ENCODE measurements at regions of chr3 and their contacts with region 1.

Region 1: GRCh38 chr3:50192689-50193141 is 1.3 kb downstream of the GNAT1 start:
- DNase-seq: peak in 9 of 10 donors; percentile 49 to 94 (median 83)

Region 2: GRCh38 chr3:50121416-50122032 is 71.2 kb before region 1 on chr3:
- intact Hi-C with region 1: loop called (anchors 1 kb)
- DNase-seq: peak; percentile 61 to 97 (median 82)

Region 3: DNA sequence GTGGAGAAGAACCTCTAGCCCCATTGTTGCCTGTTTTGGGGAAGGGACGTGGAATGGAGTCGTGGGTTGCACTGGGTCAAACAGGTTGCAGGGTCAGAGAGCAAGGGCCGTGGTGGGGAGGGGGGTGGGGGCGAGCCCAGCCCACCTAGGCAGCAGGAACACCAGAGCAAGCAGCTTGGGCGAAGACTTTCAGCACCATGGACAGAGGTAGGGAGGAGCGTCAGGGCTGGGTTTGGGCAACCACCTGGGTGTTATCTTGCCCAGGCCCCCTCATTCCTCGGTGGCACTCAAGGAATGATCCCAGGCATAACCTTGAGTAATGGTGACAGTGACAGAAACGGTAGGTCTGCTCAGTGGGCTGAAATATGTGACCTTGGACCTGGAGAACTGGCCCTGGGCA is 212.5 kb after region 1 on chr3:
- intact Hi-C with region 1: no loop called
- DNase-seq: no peak

Region 4: DNA sequence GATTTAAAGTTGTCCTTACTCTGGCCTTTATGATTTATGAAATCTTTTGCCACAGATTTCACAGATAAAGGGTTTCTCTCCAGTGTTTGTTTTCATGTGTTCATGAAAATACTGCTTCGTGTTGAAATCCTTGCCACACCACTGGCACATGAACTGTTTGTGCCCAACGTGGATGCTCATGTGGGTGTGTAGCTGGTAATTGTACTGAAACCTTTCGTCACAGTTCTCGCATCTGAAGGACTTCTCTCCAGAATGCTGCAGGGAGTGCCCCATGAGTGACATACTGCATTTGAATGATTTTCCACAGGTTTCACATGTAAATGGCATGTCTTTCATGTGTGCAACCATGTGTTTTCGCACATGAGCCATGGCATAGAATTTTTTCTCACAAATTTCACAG is 593.9 kb after region 1 on chr3:
- intact Hi-C with region 1: no loop called
- DNase-seq: no peak